ENCODE measurements at regions of chrX and their contacts with region 1.

Region 1: DNA sequence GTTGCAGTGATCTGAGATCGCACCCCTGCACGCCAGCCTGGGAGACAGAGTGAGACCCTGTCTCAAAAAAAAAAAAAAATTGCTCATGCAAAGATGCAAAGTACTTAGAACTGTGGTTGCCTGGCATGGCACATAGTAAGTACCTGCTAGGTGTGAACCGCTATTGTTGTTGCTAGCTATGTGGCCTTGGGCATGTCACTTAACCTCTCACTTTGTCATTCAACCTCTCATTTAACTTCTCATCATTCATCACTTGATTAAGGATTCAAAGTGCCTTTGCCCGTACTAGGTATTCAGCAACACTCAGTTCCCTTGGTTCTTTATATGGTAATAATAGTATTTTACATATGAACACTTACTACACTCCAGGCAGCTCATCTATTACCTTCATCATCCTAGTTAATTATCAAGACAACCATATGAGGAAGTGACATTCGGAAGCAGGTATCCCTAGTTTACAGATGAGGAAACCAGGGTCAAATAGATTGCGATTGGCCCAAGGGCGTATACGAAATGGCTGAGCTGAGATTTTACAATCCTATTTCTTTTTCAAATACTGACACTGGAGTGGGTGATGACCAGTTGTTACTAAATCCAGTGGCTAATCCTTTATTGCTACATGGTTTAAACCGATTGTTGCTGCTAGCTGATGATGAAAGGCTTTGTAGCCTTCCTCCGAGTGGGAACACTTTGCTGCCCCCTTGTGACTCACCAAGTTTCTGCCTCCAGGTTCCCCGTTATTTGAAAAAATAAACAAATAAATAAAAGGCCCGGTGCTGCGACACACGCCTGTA is 28.8 kb upstream of the SOWAHD start:
- DNase-seq: peak; percentile 23 to 77 (median 58)
- ATAC-seq: peak; percentile 85
- H3K4me3 ChIP-seq: no peak overlapping the region
- H3K4me3 Mint-ChIP-seq: no peak overlapping the region
- H3K27ac ChIP-seq: no peak overlapping the region
- H3K27ac Mint-ChIP-seq: peak overlapping the region in 3 of 9 donors; percentile 14 to 41 (median 25)
- H3K4me1 ChIP-seq: no peaks in the 10 kb centered on the region
- H3K4me1 Mint-ChIP-seq: peaks cover 0 to 13% (median 10%) of the 10 kb centered on the region in 7 donors
- H3K27me3 ChIP-seq: no peaks in the 10 kb centered on the region
- H3K27me3 Mint-ChIP-seq: no peaks in the 10 kb centered on the region

Region 2: DNA sequence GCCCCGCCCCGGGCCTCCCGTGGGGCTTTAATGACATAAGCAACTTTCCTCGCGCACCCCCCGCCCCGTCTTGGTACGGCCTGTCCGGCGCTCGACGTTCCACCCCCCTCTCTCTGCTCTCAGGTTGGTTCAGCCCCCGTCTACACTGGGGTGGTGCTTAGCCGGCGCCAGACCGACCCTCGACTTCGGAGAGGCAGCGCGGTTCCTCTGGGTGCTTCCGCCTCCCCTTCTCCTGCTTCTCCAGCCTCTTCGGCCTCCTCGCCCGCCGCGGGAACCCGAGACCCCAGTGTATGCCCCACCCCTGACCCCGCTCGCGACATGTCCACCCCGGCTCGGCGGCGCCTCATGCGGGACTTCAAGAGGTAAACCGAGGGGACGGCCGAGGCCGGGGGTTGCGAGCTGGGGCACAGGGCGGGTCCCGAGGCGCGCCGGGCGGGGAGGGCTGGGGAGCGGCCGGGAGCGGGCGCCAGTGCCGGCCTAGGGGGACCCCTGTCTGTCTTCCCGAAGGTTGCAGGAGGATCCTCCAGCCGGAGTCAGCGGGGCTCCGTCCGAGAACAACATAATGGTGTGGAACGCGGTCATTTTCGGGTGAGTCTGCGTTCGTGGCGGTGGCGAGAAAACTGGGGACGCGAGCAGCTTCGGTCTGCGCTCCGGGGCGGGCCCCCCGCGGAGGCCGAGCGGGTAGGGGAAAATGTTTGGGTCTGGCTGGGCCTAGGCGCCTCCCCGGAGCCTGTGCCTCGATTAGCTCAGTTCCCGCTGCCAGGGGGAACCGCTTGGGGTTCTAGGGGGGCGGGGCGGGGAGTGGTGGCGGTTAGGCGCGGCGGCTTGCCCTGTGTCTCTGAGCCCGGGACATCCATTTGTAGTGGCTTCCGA is 155.0 kb before region 1 on chrX and contains the start of gene UBE2A:
- CTCF ChIA-PET with region 1: interaction called, 5 read pairs
- POLR2A ChIA-PET with region 1: interaction called, 3 read pairs
- intact Hi-C with region 1: loop called in 1 of 2 experiments (anchors 1 kb)
- DNase-seq: peak; percentile 72 to 89 (median 85)
- ATAC-seq: peak; percentile 99
- H3K4me3 ChIP-seq: peak within 1 kb of the TSS; percentile 72
- H3K4me3 Mint-ChIP-seq: peak within 1 kb of the TSS; percentile 85 to 96 (median 92)
- H3K27ac ChIP-seq: peak within 1 kb of the TSS; percentile 88
- H3K27ac Mint-ChIP-seq: peak within 1 kb of the TSS; percentile 85 to 97 (median 90)
- H3K4me1 ChIP-seq: peaks cover 0 to 11% of the 10 kb centered on the region in 2 donors
- H3K4me1 Mint-ChIP-seq: peaks cover 7 to 35% (median 18%) of the 10 kb centered on the region in 7 donors
- H3K27me3 ChIP-seq: no peaks in the 10 kb centered on the region
- H3K27me3 Mint-ChIP-seq: no peaks in the 10 kb centered on the region
- total RNA-seq, gene UBE2A: 34.0 to 74.7 (median 60.2) TPM

Region 3: GRCh38 chrX:119617517-119618164 is 112.0 kb before region 1 on chrX:
- CTCF ChIA-PET with region 1: interaction called, 5 read pairs
- POLR2A ChIA-PET with region 1: interaction called, 5 read pairs
- intact Hi-C with region 1: loop called in 1 of 2 experiments (anchors 1 kb)
- DNase-seq: no peak
- ATAC-seq: peak; percentile 27
- H3K4me3 ChIP-seq: no peak overlapping the region
- H3K4me3 Mint-ChIP-seq: no peak overlapping the region
- H3K27ac ChIP-seq: no peak overlapping the region
- H3K27ac Mint-ChIP-seq: peak overlapping the region in 4 of 9 donors; percentile 21 to 67 (median 50)
- H3K4me1 ChIP-seq: no peaks in the 10 kb centered on the region
- H3K4me1 Mint-ChIP-seq: peaks cover 0 to 14% (median 5%) of the 10 kb centered on the region in 7 donors
- H3K27me3 ChIP-seq: no peaks in the 10 kb centered on the region
- H3K27me3 Mint-ChIP-seq: no peaks in the 10 kb centered on the region

Region 4: GRCh38 chrX:119698845-119699244 is 30.8 kb before region 1 on chrX:
- CTCF ChIA-PET with region 1: interaction called, 20 read pairs
- POLR2A ChIA-PET with region 1: no interaction called
- intact Hi-C with region 1: loop called (anchors 1 kb)
- DNase-seq: peak in 5 of 9 donors; percentile 18 to 55 (median 49)
- ATAC-seq: peak; percentile 60
- H3K4me3 ChIP-seq: no peak overlapping the region
- H3K4me3 Mint-ChIP-seq: no peak overlapping the region
- H3K27ac ChIP-seq: no peak overlapping the region
- H3K27ac Mint-ChIP-seq: peak overlapping the region in 1 of 9 donors; percentile 63
- H3K4me1 ChIP-seq: no peaks in the 10 kb centered on the region
- H3K4me1 Mint-ChIP-seq: peaks cover 5 to 15% (median 11%) of the 10 kb centered on the region in 7 donors
- H3K27me3 ChIP-seq: no peaks in the 10 kb centered on the region
- H3K27me3 Mint-ChIP-seq: no peaks in the 10 kb centered on the region

Region 5: GRCh38 chrX:119775517-119776238 is 46.1 kb after region 1 on chrX:
- CTCF ChIA-PET with region 1: interaction called, 6 read pairs
- POLR2A ChIA-PET with region 1: no interaction called
- intact Hi-C with region 1: loop called (anchors 1 kb)
- DNase-seq: no peak
- ATAC-seq: peak; percentile 59
- H3K4me3 ChIP-seq: no peak overlapping the region
- H3K4me3 Mint-ChIP-seq: peak overlapping the region in 2 of 10 donors; percentile 31 to 54
- H3K27ac ChIP-seq: no peak overlapping the region
- H3K27ac Mint-ChIP-seq: peak overlapping the region in 2 of 9 donors; percentile 36 to 73
- H3K4me1 ChIP-seq: no peaks in the 10 kb centered on the region
- H3K4me1 Mint-ChIP-seq: peaks cover 0 to 6% (median 0%) of the 10 kb centered on the region in 7 donors
- H3K27me3 ChIP-seq: no peaks in the 10 kb centered on the region
- H3K27me3 Mint-ChIP-seq: no peaks in the 10 kb centered on the region

Region 6: DNA sequence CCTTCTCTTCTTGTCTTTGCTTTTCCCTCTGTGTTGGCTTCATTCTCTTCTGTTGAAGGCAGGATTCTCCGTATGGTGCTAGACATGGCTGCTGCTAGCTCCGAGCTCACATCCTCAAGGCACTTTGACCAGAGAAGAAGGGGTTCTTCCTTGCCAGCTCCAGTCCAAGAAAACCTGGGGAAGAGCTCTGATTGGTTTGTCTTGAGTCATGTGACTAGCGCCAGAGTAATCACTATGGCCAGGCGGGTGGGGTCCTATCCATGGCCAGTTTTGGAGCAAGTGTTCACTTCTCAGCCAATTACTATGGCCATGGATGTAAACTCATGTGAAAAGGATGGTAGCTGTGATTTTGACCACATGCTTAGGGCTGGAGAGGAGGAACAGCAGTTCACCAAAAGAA is 1071.8 kb after region 1 on chrX:
- CTCF ChIA-PET with region 1: no interaction called
- POLR2A ChIA-PET with region 1: no interaction called
- intact Hi-C with region 1: no loop called
- DNase-seq: no peak
- ATAC-seq: no peak
- H3K4me3 ChIP-seq: no peak overlapping the region
- H3K4me3 Mint-ChIP-seq: no peak overlapping the region
- H3K27ac ChIP-seq: no peak overlapping the region
- H3K27ac Mint-ChIP-seq: no peak overlapping the region
- H3K4me1 ChIP-seq: peaks cover 0 to 6% of the 10 kb centered on the region in 2 donors
- H3K4me1 Mint-ChIP-seq: peaks cover 4 to 39% (median 33%) of the 10 kb centered on the region in 7 donors
- H3K27me3 ChIP-seq: no peaks in the 10 kb centered on the region
- H3K27me3 Mint-ChIP-seq: no peaks in the 10 kb centered on the region

Measured in naive thymus-derived CD4-positive, alpha-beta T cell (primary cell).